ENCODE measurements at regions of chr7 and their contacts with region 1.

Region 1: DNA sequence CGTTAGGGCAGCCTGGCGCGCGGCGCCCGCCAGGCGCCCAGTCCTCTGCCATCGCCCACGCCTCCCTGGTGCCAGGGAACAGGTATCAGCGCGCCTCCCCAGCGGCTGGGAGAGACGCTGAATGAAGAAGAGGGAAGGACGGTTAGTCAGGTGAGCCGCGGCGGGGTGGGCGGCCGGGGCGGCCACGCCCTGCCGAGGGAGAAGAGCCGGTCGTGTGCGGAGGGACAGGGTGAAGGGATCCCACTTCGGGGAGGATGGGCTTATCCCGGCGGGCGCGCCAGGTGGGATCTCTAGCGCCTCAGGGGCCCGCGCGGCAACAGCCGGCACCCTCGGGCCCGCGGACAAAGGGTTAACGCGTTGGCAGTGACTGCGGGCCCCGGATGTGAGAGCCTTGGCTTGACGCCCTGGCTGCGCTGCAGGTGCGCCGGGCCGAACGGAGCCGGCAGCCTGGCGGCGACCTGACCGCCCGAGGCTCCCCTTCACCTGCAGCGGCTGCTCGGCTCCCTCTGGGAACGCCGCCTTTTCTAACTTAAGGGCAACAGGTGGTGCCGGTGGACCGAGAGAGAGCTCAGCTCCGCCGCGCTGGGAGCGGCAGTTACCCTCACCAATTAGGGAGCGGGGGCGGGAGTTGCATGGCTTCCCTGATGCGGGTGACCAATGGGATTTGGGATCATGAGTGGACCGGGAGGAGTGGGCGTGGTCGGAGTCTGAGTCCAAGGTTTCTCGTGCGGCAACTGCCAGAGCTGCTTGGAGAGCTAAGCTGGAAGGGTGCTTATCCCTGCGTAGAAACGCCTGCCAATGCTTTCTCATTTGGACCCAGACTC is at the start of gene ARL4A:
- DNase-seq: peak; percentile 98 to 99
- ATAC-seq: peak; percentile 93 to 96
- H3K4me3 ChIP-seq: peak within 1 kb of the TSS; percentile 87 to 96 (median 91)
- H3K27ac ChIP-seq: peak within 1 kb of the TSS; percentile 80 to 87 (median 86)
- H3K4me1 ChIP-seq: peaks cover 0 to 15% of the 10 kb centered on the region in 2 donors
- H3K27me3 ChIP-seq: no peaks in the 10 kb centered on the region
- CTCF ChIP-seq: peak in 3 of 5 experiments; percentile 0 to 13 (median 12)
- POLR2A ChIP-seq: peak; percentile 54 to 81
- total RNA-seq, gene ARL4A: 8.6 to 20.4 (median 14.2) TPM

Region 2: GRCh38 chr7:12211054-12211710 is 475.9 kb before region 1 on chr7 and contains the start of gene TMEM106B:
- in situ Hi-C with region 1: no loop called
- intact Hi-C with region 1: loop called (anchors 5 kb)
- DNase-seq: peak; percentile 94 to 97
- ATAC-seq: peak; percentile 92 to 93
- H3K4me3 ChIP-seq: peak within 1 kb of the TSS; percentile 76 to 90 (median 82)
- H3K27ac ChIP-seq: peak within 1 kb of the TSS; percentile 92 to 96 (median 94)
- H3K4me1 ChIP-seq: peaks cover 17% of the 10 kb centered on the region in 2 donors
- H3K27me3 ChIP-seq: no peaks in the 10 kb centered on the region
- CTCF ChIP-seq: peak in 3 of 5 experiments; percentile 25 to 41 (median 41)
- POLR2A ChIP-seq: peak; percentile 81 to 84
- total RNA-seq, gene TMEM106B: 42.8 to 112 (median 60.6) TPM

Region 3: GRCh38 chr7:12715372-12716133 is 28.4 kb after region 1 on chr7:
- in situ Hi-C with region 1: no loop called
- intact Hi-C with region 1: loop called (anchors 2 kb)
- DNase-seq: peak; percentile 72 to 76
- ATAC-seq: peak; percentile 95 to 97
- H3K4me3 ChIP-seq: peak overlapping the region; percentile 32 to 55 (median 38)
- H3K27ac ChIP-seq: peak overlapping the region; percentile 71 to 86 (median 78)
- H3K4me1 ChIP-seq: peaks cover 11 to 82% of the 10 kb centered on the region in 2 donors
- H3K27me3 ChIP-seq: no peaks in the 10 kb centered on the region
- CTCF ChIP-seq: no peak
- POLR2A ChIP-seq: peak; percentile 26 to 46

Region 4: GRCh38 chr7:12727455-12728191 is 40.5 kb after region 1 on chr7:
- in situ Hi-C with region 1: no loop called
- intact Hi-C with region 1: loop called (anchors 2 kb)
- DNase-seq: no peak
- ATAC-seq: peak; percentile 4 to 31
- H3K4me3 ChIP-seq: peak overlapping the region in 1 of 4 donors; percentile 42
- H3K27ac ChIP-seq: peak overlapping the region; percentile 42 to 81 (median 64)
- H3K4me1 ChIP-seq: peaks cover 37 to 47% of the 10 kb centered on the region in 2 donors
- H3K27me3 ChIP-seq: no peaks in the 10 kb centered on the region
- CTCF ChIP-seq: no peak
- POLR2A ChIP-seq: no peak

Region 5: DNA sequence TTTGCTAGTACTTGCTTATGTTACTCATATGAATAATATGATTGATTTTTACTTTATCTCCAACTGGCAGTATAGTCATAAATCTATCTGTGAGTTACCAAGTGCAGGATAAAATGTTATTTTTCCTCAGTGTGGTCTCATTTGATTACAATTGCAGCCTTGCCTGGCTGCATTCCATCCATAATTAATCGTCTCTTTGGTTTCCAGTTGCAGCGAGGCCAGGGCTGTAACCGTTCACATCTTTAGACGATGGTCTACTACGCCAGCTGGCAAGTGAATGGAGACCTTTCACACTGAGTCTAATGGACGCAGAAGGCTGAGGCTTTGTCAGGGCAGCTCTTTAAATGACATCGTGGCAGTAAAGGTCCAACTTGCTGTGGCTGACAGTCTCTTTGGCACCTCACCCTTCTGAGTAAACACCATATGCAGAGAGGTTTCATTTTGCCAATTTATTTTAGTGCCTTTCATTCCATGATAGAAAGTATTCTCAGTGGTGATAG is 84.3 kb after region 1 on chr7:
- in situ Hi-C with region 1: no loop called
- intact Hi-C with region 1: loop called (anchors 5 kb)
- DNase-seq: peak in 1 of 2 donors; percentile 5
- ATAC-seq: no peak
- H3K4me3 ChIP-seq: peak overlapping the region in 3 of 4 donors; percentile 5 to 13 (median 13)
- H3K27ac ChIP-seq: no peak overlapping the region
- H3K4me1 ChIP-seq: peaks cover 17 to 20% of the 10 kb centered on the region in 2 donors
- H3K27me3 ChIP-seq: no peaks in the 10 kb centered on the region
- CTCF ChIP-seq: no peak
- POLR2A ChIP-seq: no peak

Region 6: DNA sequence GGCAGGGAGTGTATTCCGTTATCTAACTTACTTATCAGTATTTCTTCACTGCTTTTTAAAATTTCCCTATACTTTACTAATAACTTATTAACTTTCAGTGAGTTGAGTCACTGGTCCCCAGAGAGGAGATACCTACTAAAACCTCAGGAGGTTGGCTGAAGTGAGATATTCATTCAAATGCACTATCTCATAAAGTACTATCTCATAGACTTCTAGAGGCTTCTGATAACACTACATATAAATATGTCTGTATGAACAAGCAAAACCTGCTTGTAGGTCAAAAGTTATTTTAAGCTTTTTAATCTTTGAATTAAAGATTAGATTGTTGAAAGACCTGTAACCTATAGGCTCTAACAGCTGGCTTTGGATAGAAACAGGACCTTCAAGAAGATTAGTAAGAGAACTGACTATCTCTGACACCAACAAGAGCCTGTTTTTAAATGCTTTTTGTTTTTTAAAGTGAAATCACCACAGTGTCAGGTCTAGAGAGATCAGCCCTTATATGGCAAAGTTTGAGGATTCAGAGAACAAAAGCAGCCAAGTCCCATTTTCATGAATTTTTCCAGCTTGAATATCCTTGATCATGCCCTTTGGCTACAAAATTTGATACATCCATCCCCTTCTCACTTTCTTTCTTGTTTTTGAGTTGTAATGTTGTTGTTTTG is 242.5 kb after region 1 on chr7:
- in situ Hi-C with region 1: no loop called
- intact Hi-C with region 1: no loop called
- DNase-seq: no peak
- ATAC-seq: no peak
- H3K4me3 ChIP-seq: no peak overlapping the region
- H3K27ac ChIP-seq: no peak overlapping the region
- H3K4me1 ChIP-seq: no peaks in the 10 kb centered on the region
- H3K27me3 ChIP-seq: no peaks in the 10 kb centered on the region
- CTCF ChIP-seq: no peak
- POLR2A ChIP-seq: no peak

Region 7: DNA sequence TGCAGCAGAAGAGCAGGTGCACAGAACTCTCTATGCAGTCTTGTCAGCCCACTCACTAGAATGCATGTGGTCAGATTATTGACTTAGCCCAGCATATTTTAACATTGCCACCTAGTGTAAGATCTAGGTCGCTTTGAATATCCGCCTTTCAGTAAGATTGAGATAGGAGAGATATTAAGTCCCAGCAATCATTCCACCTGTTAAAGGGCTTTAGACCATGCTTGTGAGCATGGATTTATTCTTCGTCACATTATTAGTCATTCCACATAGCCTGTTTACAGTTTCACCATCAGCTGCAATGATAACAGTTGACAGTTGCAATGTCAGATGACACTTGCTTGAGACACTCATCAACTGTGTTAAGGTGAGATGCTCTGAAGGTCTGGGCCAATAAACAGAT is 492.0 kb after region 1 on chr7:
- in situ Hi-C with region 1: no loop called
- intact Hi-C with region 1: loop called (anchors 5 kb)
- DNase-seq: no peak
- ATAC-seq: peak; percentile 41 to 62
- H3K4me3 ChIP-seq: no peak overlapping the region
- H3K27ac ChIP-seq: no peak overlapping the region
- H3K4me1 ChIP-seq: peaks cover 0 to 18% of the 10 kb centered on the region in 2 donors
- H3K27me3 ChIP-seq: no peaks in the 10 kb centered on the region
- CTCF ChIP-seq: peak in 1 of 5 experiments; percentile 26
- POLR2A ChIP-seq: no peak